A673 (cell line): ENCODE measurements at regions of chr9 and their contacts with region 1.

Region 1: GRCh38 chr9:73200694-73201452 is 49.2 kb downstream of the ANXA1 start:
- DNase-seq: peak; percentile 74
- H3K4me3 ChIP-seq: no peak overlapping the region
- H3K27ac ChIP-seq: no peak overlapping the region
- H3K4me1 ChIP-seq: peaks cover 5% of the 10 kb centered on the region
- H3K27me3 ChIP-seq: no peaks in the 10 kb centered on the region
- CTCF ChIP-seq: peak; percentile 73

Region 2: DNA sequence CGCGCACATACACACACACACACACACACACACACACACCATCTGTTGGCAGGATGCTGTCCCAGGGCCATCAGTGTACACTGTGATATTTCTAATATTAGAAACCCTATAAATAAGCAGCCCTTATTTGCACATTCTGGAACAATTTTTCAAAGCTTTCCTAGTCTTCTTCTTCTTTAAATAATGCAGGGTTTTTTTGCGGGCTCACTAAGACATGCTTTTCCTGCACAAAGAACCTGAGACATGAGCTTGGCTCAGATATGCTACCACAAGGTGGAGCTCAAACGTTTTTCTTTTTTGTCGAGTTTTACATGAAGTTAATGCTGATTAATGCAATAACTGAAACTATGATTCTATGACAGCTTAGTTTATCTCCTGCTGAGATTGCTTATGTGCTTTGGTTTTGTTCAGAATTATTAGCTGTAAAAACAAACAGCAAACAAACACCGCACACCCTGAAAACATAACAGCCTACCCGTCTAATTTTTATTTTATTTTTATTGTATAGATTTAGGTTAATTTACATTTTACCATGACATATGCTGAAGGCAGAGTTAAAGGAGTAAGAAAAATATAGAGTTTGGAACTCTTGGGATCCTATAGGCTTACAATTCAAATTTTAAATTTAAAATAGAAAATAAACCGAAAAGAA is 343.8 kb before region 1 on chr9:
- CTCF ChIA-PET with region 1: no interaction called
- POLR2A ChIA-PET with region 1: no interaction called
- intact Hi-C with region 1: loop called (anchors 5 kb)
- DNase-seq: peak; percentile 84
- H3K4me3 ChIP-seq: no peak overlapping the region
- H3K27ac ChIP-seq: no peak overlapping the region
- H3K4me1 ChIP-seq: peaks cover 17% of the 10 kb centered on the region
- H3K27me3 ChIP-seq: no peaks in the 10 kb centered on the region
- CTCF ChIP-seq: peak; percentile 80

Region 3: GRCh38 chr9:73437758-73438157 is 236.9 kb after region 1 on chr9:
- CTCF ChIA-PET with region 1: no interaction called
- POLR2A ChIA-PET with region 1: no interaction called
- intact Hi-C with region 1: loop called (anchors 10 kb)
- DNase-seq: no peak
- H3K4me3 ChIP-seq: no peak overlapping the region
- H3K27ac ChIP-seq: no peak overlapping the region
- H3K4me1 ChIP-seq: no peaks in the 10 kb centered on the region
- H3K27me3 ChIP-seq: peaks cover 6% of the 10 kb centered on the region
- CTCF ChIP-seq: no peak

Region 4: GRCh38 chr9:74379718-74380117 is 1178.8 kb after region 1 on chr9:
- CTCF ChIA-PET with region 1: no interaction called
- POLR2A ChIA-PET with region 1: no interaction called
- intact Hi-C with region 1: loop called (anchors 10 kb)
- DNase-seq: peak; percentile 17
- H3K4me3 ChIP-seq: no peak overlapping the region
- H3K27ac ChIP-seq: no peak overlapping the region
- H3K4me1 ChIP-seq: no peaks in the 10 kb centered on the region
- H3K27me3 ChIP-seq: no peaks in the 10 kb centered on the region
- CTCF ChIP-seq: 0 out of 2 replicates have a peak, but pooled peaks have one; percentile 39

Region 5: GRCh38 chr9:74645007-74645639 is 1444.2 kb after region 1 on chr9:
- CTCF ChIA-PET with region 1: no interaction called
- POLR2A ChIA-PET with region 1: no interaction called
- intact Hi-C with region 1: loop called (anchors 10 kb)
- DNase-seq: peak; percentile 35
- H3K4me3 ChIP-seq: no peak overlapping the region
- H3K27ac ChIP-seq: no peak overlapping the region
- H3K4me1 ChIP-seq: no peaks in the 10 kb centered on the region
- H3K27me3 ChIP-seq: peaks cover 19% of the 10 kb centered on the region
- CTCF ChIP-seq: peak; percentile 67